ENCODE measurements at regions of chr11 and their contacts with region 1.

Region 1: DNA sequence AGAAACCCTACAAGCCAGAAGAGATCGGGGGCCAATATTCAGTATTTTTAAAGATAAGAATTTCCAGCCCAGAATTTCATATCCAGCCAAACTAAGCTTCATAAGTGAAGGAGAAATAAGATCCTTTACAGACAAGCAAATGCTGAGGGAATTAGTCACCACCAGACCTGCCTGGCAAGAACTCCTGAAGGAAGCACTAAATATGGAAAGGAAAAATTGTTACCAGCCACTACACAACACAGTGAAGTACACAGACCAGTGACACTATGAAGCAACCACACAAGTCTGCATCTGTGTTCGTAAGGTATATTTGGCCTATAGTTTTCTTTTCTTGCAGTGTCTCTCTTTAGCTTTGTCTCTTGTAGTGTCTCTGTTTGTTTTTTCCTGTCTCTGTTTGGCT is 29.0 kb downstream of the TMEM225 start:
- DNase-seq: no peak

Region 2: GRCh38 chr11:123800036-123800435 is 56.4 kb before region 1 on chr11:
- intact Hi-C with region 1: loop called in 1 of 2 experiments (anchors 2 kb)
- DNase-seq: no peak

Region 3: GRCh38 chr11:123833095-123833494 is 23.3 kb before region 1 on chr11:
- intact Hi-C with region 1: no loop called
- DNase-seq: no peak

Region 4: DNA sequence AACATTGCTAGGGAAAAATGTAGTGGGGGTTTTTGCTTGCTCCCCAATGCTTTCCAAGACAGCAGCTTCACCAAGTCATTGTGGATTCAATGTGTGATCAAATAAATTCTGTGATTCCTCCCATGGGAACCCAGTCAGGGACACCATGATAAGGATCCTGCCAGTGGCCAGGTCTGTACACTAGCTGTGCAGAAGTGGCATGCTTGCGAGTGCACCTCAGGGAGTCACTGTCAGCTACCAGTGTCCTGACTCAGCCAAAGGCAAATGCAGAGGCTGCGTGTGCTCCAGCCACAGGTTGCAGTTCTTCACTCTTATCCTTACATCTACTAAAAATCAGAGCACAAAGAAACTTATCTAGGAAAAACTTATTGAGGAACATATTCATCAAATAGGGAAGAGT is 1833.6 kb after region 1 on chr11:
- intact Hi-C with region 1: loop called in 1 of 2 experiments (anchors 5 kb)
- DNase-seq: no peak